Tibial artery (tissue), 4 donors: ENCODE measurements at regions of chr1 and their contacts with region 1.

Region 1: DNA sequence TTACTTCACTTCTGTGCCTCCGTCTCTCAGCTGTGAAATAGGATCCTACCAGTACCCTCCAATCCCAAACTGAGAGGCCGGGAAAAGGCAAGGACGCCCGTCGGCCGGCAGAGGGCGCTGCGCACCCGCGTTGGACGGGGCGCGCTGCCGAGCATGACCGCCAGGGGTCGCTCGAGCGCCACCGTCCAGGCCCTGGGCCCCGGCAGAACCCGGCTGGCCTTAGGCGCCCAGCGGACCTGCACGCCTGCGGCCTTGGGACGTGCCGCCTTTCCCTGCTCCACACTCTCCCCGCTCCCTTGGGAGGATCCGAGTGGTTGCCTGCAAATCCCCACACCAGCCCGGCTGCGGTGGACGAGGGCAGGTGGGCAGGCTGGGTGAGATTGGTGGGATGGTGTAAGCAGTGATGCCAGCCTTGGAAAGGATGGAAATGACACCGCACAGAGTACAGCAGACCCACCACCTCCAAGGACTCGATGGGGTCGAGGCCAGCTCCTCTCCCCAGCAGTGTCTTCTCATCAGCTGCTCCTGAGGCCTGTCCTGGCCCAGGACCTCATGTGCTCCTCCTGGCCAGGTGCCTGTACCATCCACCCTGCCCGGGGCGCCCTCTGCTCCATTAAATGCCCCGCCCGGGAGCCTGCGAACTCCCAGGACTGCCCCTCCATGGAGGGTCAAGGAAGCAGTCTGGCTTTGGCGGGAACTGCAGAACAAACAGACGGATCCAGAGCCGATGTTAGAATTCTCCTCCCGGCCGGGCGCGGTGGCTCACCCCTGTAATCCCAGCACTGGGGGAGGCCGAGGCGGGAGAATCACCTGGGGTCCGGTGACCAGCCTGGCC is 47.4 kb upstream of the LBR start:
- DNase-seq: peak; percentile 48 to 85
- H3K4me3 ChIP-seq: no peak overlapping the region
- H3K27ac ChIP-seq: no peak overlapping the region
- H3K4me1 ChIP-seq: peaks cover 0 to 11% (median 4%) of the 10 kb centered on the region in 4 donors
- H3K27me3 ChIP-seq: no peaks in the 10 kb centered on the region
- CTCF ChIP-seq: peak; percentile 100

Region 2: GRCh38 chr1:225845571-225846259 is 370.5 kb after region 1 on chr1:
- intact Hi-C with region 1: loop called (anchors 5 kb)
- DNase-seq: peak; percentile 82 to 92
- H3K4me3 ChIP-seq: no peak overlapping the region
- H3K27ac ChIP-seq: peak overlapping the region; percentile 11 to 54
- H3K4me1 ChIP-seq: peaks cover 0 to 9% (median 6%) of the 10 kb centered on the region in 4 donors
- H3K27me3 ChIP-seq: no peaks in the 10 kb centered on the region
- CTCF ChIP-seq: peak; percentile 83 to 85

Region 3: GRCh38 chr1:225911191-225912130 is 436.3 kb after region 1 on chr1:
- intact Hi-C with region 1: loop called (anchors 2 kb)
- DNase-seq: peak; percentile 50 to 77
- H3K4me3 ChIP-seq: peak overlapping the region in 1 of 2 donors; percentile 12
- H3K27ac ChIP-seq: no peak overlapping the region
- H3K4me1 ChIP-seq: peaks cover 0 to 9% (median 7%) of the 10 kb centered on the region in 4 donors
- H3K27me3 ChIP-seq: no peaks in the 10 kb centered on the region
- CTCF ChIP-seq: peak; percentile 88 to 95

Region 4: DNA sequence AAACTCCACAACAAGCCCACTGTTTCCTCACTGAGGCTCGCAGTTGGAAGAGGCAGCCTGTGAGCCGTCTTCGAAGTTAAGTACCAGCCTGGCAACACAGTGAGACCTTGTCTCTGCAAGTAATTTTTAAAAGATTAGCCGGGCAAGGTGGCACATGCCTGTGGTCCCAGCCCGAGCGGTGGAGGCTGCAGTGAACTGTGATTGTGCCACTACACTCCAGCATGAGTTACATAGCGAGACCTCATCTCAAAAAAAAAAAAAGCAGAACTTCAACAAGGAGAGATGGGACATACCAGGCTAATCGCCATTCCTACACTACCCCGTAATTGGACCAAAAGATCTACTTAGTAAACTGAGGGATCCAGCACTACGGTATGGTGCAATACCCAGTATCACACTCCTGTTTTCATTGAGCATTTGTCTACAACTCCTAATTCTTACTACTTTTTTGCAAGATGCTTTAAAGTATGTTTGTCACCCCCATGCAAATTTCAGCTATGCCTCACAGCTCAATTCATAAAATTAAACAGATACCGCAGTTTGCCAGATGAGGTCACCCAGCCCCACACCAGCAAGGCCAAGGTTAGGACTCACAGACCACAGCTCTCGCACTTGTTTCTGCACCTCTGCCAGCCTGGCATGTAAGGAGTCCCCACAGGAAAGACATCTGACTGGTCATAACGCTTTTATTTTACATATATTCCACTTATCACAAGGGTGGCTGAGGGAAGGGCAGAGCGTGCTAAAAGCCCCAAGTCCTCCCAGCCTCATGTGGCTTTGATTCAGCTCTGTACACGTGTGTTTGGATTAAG is 502.9 kb after region 1 on chr1:
- intact Hi-C with region 1: loop called (anchors 2 kb)
- DNase-seq: no peak
- H3K4me3 ChIP-seq: no peak overlapping the region
- H3K27ac ChIP-seq: no peak overlapping the region
- H3K4me1 ChIP-seq: no peaks in the 10 kb centered on the region
- H3K27me3 ChIP-seq: no peaks in the 10 kb centered on the region
- CTCF ChIP-seq: no peak